ENCODE measurements at regions of chr7 and their contacts with region 1.

Region 1: DNA sequence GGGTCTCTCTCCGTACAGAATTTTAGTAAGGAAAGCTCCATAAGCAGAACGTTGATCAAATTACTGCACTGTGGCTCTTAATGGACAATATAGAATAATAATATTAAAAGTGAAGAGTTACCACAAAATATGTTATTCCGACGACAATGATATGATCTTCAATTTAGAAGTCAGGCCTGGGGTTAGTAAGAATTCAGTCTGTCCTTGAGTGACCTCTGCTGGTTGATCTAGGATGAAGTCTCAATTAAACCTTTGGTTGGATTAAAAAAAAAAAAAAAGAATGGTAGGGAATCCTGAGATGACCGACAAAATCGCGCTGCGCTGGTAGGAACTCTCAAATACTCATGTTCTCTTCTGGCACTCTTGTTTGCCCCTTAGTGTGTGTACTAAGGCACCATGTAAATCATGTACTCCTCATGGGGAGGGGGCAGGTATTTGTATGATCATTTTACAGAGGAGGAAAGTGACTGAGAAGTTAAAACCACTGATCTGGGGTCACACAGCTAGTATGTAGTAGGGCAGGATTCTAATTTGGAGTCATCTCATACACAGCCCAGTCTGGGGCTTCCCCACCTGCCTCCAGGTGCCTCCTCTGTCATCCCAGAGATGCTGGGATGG is 161.3 kb upstream of the NPVF start:
- DNase-seq: no peak
- H3K4me3 ChIP-seq: no peak overlapping the region
- H3K27ac ChIP-seq: no peak overlapping the region
- H3K4me1 ChIP-seq: peaks cover 12 to 42% (median 14%) of the 10 kb centered on the region in 3 donors
- H3K27me3 ChIP-seq: peaks cover 0 to 7% (median 0%) of the 10 kb centered on the region in 4 donors
- CTCF ChIP-seq: peak in 5 of 6 experiments; percentile 48 to 60 (median 52)
- POLR2A ChIP-seq: no peak

Region 2: GRCh38 chr7:25259587-25260243 is 129.9 kb before region 1 on chr7:
- intact Hi-C with region 1: loop called (anchors 2 kb)
- DNase-seq: peak; percentile 7
- H3K4me3 ChIP-seq: no peak overlapping the region
- H3K27ac ChIP-seq: no peak overlapping the region
- H3K4me1 ChIP-seq: peaks cover 0 to 10% (median 0%) of the 10 kb centered on the region in 3 donors
- H3K27me3 ChIP-seq: no peaks in the 10 kb centered on the region
- CTCF ChIP-seq: peak; percentile 74 to 78 (median 78)
- POLR2A ChIP-seq: no peak

Measured in esophagus squamous epithelium (tissue), 5 donors.